ENCODE measurements at regions of chr20 and their contacts with region 1.

Region 1: GRCh38 chr20:6030453-6031080 is 23.3 kb downstream of the LRRN4 start:
- DNase-seq: no peak
- ATAC-seq: no peak
- H3K4me3 ChIP-seq: no peak overlapping the region
- H3K27ac ChIP-seq: no peak overlapping the region
- H3K4me1 ChIP-seq: no peaks in the 10 kb centered on the region
- H3K27me3 ChIP-seq: no peaks in the 10 kb centered on the region
- CTCF ChIP-seq: no peak

Region 2: DNA sequence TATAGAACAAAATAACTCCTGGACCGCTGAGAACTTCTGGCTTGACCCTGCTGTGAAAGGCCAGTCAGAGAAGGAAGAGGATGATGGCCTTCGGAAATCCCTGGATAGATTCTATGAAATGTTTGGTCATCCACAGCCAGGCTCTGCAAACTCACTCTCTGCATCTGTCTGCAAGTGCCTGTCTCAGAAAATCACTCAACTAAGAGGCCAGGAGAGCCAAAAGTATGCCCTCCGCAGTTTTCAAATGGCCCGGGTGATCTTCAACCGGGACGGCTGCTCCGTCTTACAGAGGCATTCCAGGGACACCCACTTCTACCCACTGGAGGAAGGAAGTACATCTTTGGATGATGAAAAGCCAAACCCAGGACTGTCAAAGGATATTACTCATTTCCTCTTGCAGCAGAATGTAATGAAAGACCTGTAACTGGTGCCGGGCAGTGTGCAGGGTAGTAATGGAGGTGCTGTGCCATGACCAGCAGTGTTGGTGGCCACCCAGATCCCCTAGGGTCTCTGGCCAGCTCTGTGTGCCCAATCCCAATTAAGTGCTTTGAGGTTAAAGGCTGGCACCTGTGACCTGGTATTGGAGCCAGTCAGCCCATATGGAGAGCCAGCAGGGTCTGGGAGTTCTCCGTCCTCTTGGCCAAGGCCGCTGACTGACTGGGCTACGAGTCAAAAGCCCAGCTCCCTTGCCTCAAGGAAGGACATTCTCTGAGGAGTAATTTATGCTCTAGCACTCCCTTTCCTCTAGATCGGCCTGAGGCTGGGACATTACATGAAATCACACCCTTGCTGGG is 167.3 kb before region 1 on chr20:
- CTCF ChIA-PET with region 1: no interaction called
- POLR2A ChIA-PET with region 1: no interaction called
- in situ Hi-C with region 1: no loop called
- intact Hi-C with region 1: no loop called
- DNase-seq: no peak
- ATAC-seq: no peak
- H3K4me3 ChIP-seq: no peak overlapping the region
- H3K27ac ChIP-seq: no peak overlapping the region
- H3K4me1 ChIP-seq: no peaks in the 10 kb centered on the region
- H3K27me3 ChIP-seq: no peaks in the 10 kb centered on the region
- CTCF ChIP-seq: no peak

Region 3: DNA sequence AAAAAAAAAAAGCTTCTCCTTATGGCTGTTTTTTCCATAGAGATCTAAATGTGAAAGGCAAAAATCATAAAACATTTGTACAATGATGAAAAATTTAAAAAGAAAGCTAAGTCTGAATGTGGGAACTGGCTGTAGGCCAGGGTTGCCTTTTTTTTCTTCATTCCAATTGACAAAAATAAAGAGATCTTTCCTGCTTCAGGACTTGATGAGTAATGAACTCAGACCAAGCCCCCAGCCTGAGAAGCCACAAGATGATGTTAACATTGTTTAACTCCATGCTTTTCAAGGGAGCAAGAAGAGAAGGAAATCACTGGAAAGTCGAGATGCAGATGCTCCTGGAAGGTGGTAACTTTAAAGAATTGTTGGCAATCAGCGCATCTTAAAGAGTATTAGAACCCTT is 121.6 kb before region 1 on chr20:
- CTCF ChIA-PET with region 1: no interaction called
- POLR2A ChIA-PET with region 1: no interaction called
- in situ Hi-C with region 1: no loop called
- intact Hi-C with region 1: no loop called
- DNase-seq: no peak
- ATAC-seq: no peak
- H3K4me3 ChIP-seq: no peak overlapping the region
- H3K27ac ChIP-seq: no peak overlapping the region
- H3K4me1 ChIP-seq: no peaks in the 10 kb centered on the region
- H3K27me3 ChIP-seq: peaks cover 29% of the 10 kb centered on the region; the same call in 1 of the 2 replicates
- CTCF ChIP-seq: no peak

Region 4: DNA sequence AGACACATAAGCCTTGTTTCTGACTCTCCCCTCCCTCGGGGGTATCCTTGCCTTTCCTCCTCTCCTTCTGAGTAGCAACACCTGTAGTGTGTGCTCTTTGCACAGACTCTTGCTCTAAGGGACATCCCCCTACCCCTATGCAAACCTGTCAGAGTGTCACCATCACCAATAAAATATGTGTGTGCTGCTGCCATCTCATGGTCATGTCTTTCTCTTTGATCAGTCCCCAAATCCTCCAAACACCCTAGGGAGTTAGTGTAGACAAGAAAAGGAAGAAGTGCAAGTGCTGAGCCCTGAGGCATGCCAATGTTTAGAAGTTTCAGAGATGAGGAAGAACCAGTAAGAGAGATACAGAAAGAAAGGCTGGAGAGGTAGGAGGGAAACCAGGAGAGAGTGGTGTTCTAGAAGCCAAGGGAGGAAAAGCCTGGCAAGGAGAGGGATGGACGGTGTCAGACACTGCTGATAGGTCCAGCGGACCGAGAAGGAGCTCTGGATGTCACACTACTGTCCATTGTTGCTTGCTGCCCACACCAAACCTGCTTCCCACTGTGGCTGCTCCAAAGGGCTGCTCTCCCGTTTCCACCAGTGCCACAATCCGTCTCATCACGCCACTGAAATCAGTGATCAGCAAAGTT is 96.6 kb before region 1 on chr20:
- CTCF ChIA-PET with region 1: no interaction called
- POLR2A ChIA-PET with region 1: no interaction called
- in situ Hi-C with region 1: no loop called
- intact Hi-C with region 1: no loop called
- DNase-seq: peak; percentile 25
- ATAC-seq: peak; percentile 83
- H3K4me3 ChIP-seq: no peak overlapping the region
- H3K27ac ChIP-seq: no peak overlapping the region
- H3K4me1 ChIP-seq: no peaks in the 10 kb centered on the region
- H3K27me3 ChIP-seq: peaks cover 5% of the 10 kb centered on the region; the same call in 1 of the 2 replicates
- CTCF ChIP-seq: peak; percentile 59

Region 5: GRCh38 chr20:5969348-5969935 is 61.1 kb before region 1 on chr20:
- CTCF ChIA-PET with region 1: no interaction called
- POLR2A ChIA-PET with region 1: interaction called, 10 read pairs
- in situ Hi-C with region 1: no loop called
- intact Hi-C with region 1: no loop called
- DNase-seq: no peak
- ATAC-seq: no peak
- H3K4me3 ChIP-seq: no peak overlapping the region
- H3K27ac ChIP-seq: no peak overlapping the region
- H3K4me1 ChIP-seq: no peaks in the 10 kb centered on the region
- H3K27me3 ChIP-seq: no peaks in the 10 kb centered on the region
- CTCF ChIP-seq: no peak